CD14-positive monocyte (primary cell): ENCODE measurements at regions of chr12 and their contacts with region 1.

Region 1: DNA sequence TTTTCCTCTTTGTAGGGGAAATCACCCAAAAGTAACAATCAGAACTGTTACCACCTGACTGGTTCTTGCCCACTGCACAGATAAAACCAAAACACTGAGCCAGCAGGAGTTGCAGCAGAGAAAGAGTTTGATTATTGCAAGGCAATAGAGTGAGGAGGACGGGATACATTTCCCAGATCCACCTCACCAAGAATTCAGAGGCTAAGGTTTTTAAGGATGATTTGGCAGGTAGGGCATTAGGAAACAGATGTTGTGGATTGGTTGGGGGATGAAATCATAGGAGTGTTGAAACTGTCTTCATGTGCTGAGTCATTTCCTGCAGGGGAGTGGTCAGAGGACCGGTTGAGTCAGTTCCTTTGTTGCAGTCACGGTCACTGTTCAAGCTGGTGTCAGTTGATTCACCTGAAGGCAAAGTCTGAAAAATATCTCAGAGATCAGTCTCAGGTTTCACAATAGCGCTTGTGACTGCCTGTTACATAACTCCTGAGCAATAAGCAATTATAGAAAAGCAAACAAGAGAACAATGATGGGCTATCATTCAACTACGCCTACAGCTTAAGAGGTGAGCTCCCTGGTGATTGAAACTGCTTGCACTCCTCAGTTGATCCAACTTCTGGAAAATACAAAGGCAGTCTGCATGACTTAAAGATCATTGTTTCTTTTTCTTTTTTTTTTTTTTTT is 20.3 kb upstream of the AMN1 start:
- DNase-seq: peak; percentile 98 to 100 (median 100)
- H3K4me3 ChIP-seq: peak overlapping the region in 1 of 3 experiments; percentile 31
- H3K4me3 Mint-ChIP-seq: no peak overlapping the region
- H3K27ac ChIP-seq: peak overlapping the region; percentile 93 to 96
- H3K27ac Mint-ChIP-seq: peak overlapping the region; percentile 97 to 99 (median 99)
- H3K4me1 ChIP-seq: peaks cover 72 to 84% of the 10 kb centered on the region in 2 donors
- H3K4me1 Mint-ChIP-seq: peaks cover 73% of the 10 kb centered on the region
- H3K27me3 ChIP-seq: no peaks in the 10 kb centered on the region
- H3K27me3 Mint-ChIP-seq: peaks cover 0 to 2% (median 0%) of the 10 kb centered on the region in 3 donors
- CTCF ChIP-seq: no peak

Region 2: DNA sequence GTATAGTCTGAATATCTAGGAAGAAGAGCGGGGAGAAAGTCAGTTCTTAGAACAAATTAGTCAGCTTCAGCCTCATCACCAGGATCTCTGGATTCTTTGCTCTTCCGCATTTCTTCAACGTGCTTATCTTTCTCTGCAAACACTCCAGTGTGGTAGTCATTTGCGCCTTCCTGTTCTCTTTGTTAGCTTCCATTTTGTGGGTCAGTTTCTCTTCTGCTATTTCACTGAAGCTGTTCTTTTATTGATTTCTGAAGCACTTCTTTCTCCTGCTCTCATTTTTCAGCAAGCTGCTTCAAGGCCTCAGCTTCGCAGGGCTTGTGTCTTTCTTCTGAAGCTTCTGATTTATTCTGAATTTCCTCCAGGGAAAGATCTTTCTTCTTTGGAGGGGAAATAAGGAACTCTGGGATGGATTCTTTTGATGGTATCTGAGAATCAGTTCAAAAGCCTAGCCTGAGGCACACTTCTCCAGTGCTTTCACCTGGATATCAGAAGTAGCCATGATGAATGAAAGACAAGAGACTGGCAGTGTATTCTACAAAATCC is 33.8 kb before region 1 on chr12:
- intact Hi-C with region 1: loop called in 1 of 2 experiments (anchors 1 kb)
- DNase-seq: peak; percentile 84 to 95 (median 87)
- H3K4me3 ChIP-seq: peak overlapping the region; percentile 15 to 62 (median 56)
- H3K4me3 Mint-ChIP-seq: peak overlapping the region; percentile 55 to 84
- H3K27ac ChIP-seq: peak overlapping the region; percentile 45 to 94
- H3K27ac Mint-ChIP-seq: peak overlapping the region; percentile 95 to 98 (median 97)
- H3K4me1 ChIP-seq: peaks cover 7 to 29% of the 10 kb centered on the region in 2 donors
- H3K4me1 Mint-ChIP-seq: peaks cover 36% of the 10 kb centered on the region
- H3K27me3 ChIP-seq: no peaks in the 10 kb centered on the region
- H3K27me3 Mint-ChIP-seq: no peaks in the 10 kb centered on the region
- CTCF ChIP-seq: no peak

Region 3: DNA sequence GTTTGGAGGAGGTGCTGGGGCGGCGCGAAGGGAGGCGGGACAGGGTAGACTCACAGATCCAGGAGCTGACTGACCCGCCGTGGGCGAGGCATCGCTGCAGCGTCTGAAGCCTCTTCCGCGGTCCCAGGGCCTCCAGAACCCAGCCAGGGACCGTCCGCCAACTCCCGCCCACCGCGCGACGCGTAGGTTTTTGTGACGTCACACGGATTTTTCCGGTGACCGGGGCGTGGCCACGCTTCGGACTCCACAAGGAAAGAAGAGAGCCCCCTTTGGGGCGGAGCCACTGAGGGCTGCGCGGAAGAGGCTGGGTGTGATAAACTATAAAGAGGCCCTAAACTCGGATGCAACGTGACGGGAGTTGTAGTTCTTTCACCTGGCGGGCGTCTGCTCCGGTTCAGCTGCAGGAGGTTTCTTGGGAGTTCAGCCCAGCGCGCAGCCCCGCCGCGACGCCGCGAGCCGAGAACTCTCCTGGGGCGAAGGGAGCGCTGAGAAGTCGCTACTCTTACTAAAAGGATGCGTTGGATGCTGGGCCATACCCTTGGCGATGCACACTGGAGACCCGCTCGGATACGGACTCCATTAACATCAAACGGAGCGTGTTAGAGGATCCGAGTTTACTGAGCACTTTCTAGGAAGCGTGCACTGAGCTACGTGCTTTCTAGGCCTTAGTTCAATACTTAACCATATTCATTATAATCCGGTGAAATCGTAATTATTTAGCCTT is 20.1 kb before region 1 on chr12 and contains the start of gene AMN1:
- intact Hi-C with region 1: loop called in 1 of 2 experiments (anchors 2 kb)
- DNase-seq: peak; percentile 99 to 100 (median 99)
- H3K4me3 ChIP-seq: peak within 1 kb of the TSS; percentile 87 to 98 (median 95)
- H3K4me3 Mint-ChIP-seq: peak within 1 kb of the TSS; percentile 98 to 99
- H3K27ac ChIP-seq: peak within 1 kb of the TSS; percentile 97 to 100
- H3K27ac Mint-ChIP-seq: peak within 1 kb of the TSS; percentile 99 to 100 (median 99)
- H3K4me1 ChIP-seq: peaks cover 67 to 81% of the 10 kb centered on the region in 2 donors
- H3K4me1 Mint-ChIP-seq: peaks cover 69% of the 10 kb centered on the region
- H3K27me3 ChIP-seq: no peaks in the 10 kb centered on the region
- H3K27me3 Mint-ChIP-seq: peaks cover 0 to 5% (median 0%) of the 10 kb centered on the region in 3 donors
- CTCF ChIP-seq: no peak
- polyA plus RNA-seq, gene AMN1: 6.0 to 7.8 (median 7.4) TPM

Region 4: DNA sequence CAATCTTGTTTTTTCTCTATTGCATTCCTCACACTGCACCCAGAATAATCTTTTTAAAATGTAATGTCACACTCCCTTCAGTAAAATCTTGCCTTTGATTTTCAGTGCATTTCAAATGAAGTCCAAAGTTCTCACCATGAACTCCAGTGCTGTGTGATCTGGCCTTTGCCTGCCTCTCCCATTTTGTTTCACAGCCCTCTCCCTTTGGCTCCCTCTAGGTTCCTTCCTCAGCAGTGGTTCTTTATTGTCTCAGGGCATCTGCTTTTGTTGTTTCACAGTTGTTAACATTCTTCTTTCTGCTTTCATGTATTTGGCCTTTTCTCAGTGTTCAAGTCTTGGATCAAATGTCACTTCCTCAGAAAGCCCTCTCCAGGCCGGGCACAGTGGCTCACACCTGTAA is 64.1 kb after region 1 on chr12:
- intact Hi-C with region 1: no loop called
- DNase-seq: no peak
- H3K4me3 ChIP-seq: no peak overlapping the region
- H3K4me3 Mint-ChIP-seq: no peak overlapping the region
- H3K27ac ChIP-seq: no peak overlapping the region
- H3K27ac Mint-ChIP-seq: peak overlapping the region in 1 of 7 donors; percentile 2
- H3K4me1 ChIP-seq: peaks cover 4% of the 10 kb centered on the region in 2 donors
- H3K4me1 Mint-ChIP-seq: peaks cover 19% of the 10 kb centered on the region
- H3K27me3 ChIP-seq: no peaks in the 10 kb centered on the region
- H3K27me3 Mint-ChIP-seq: peaks cover 0 to 3% (median 1%) of the 10 kb centered on the region in 3 donors
- CTCF ChIP-seq: no peak

Region 5: GRCh38 chr12:31832740-31833729 is 83.9 kb after region 1 on chr12:
- intact Hi-C with region 1: loop called (anchors 5 to 10 kb)
- DNase-seq: peak; percentile 88 to 97 (median 88)
- H3K4me3 ChIP-seq: peak overlapping the region in 1 of 3 experiments; percentile 34
- H3K4me3 Mint-ChIP-seq: peak overlapping the region; percentile 45 to 60
- H3K27ac ChIP-seq: peak overlapping the region; percentile 82 to 98
- H3K27ac Mint-ChIP-seq: peak overlapping the region; percentile 94 to 99 (median 97)
- H3K4me1 ChIP-seq: peaks cover 40 to 43% of the 10 kb centered on the region in 2 donors
- H3K4me1 Mint-ChIP-seq: peaks cover 29% of the 10 kb centered on the region
- H3K27me3 ChIP-seq: no peaks in the 10 kb centered on the region
- H3K27me3 Mint-ChIP-seq: peaks cover 0 to 2% (median 0%) of the 10 kb centered on the region in 3 donors
- CTCF ChIP-seq: no peak

Region 6: GRCh38 chr12:32089586-32089985 is 340.4 kb after region 1 on chr12:
- intact Hi-C with region 1: no loop called
- DNase-seq: no peak
- H3K4me3 ChIP-seq: no peak overlapping the region
- H3K4me3 Mint-ChIP-seq: no peak overlapping the region
- H3K27ac ChIP-seq: no peak overlapping the region
- H3K27ac Mint-ChIP-seq: peak overlapping the region in 1 of 7 donors; percentile 2
- H3K4me1 ChIP-seq: no peaks in the 10 kb centered on the region
- H3K4me1 Mint-ChIP-seq: peaks cover 3% of the 10 kb centered on the region
- H3K27me3 ChIP-seq: no peaks in the 10 kb centered on the region
- H3K27me3 Mint-ChIP-seq: peaks cover 0 to 2% (median 0%) of the 10 kb centered on the region in 3 donors
- CTCF ChIP-seq: no peak

Region 7: DNA sequence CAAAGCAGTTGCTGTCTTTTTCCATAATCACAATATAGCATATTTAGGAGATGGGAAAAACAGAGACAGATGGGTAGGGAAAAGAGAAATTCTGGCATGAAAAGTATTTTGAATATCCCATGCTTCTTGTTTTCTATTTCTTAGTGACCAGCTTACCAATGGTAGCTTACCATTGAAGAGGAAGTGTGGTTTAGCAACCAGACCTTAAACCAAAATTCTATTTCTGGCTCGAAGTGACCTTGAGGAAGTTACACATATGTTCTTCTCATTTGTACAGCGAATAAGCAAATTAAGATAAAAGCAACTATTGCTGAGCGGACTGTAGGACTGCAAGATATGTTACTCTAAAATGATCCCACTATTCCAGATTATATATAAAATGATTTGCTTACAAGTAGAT is 733.1 kb after region 1 on chr12:
- intact Hi-C with region 1: loop called (anchors 10 kb)
- DNase-seq: peak; percentile 77 to 94 (median 86)
- H3K4me3 ChIP-seq: peak overlapping the region in 1 of 3 experiments; percentile 66
- H3K4me3 Mint-ChIP-seq: peak overlapping the region; percentile 25 to 73
- H3K27ac ChIP-seq: peak overlapping the region; percentile 88 to 95
- H3K27ac Mint-ChIP-seq: peak overlapping the region; percentile 93 to 99 (median 98)
- H3K4me1 ChIP-seq: peaks cover 74 to 78% of the 10 kb centered on the region in 2 donors
- H3K4me1 Mint-ChIP-seq: peaks cover 56% of the 10 kb centered on the region
- H3K27me3 ChIP-seq: no peaks in the 10 kb centered on the region
- H3K27me3 Mint-ChIP-seq: no peaks in the 10 kb centered on the region
- CTCF ChIP-seq: no peak